Transverse colon (tissue), 4 donors: ENCODE measurements at regions of chr2 and their contacts with region 1.

Region 1: GRCh38 chr2:41869542-41870264 is 178.1 kb upstream of the PKDCC start:
- DNase-seq: peak; percentile 83
- H3K4me3 ChIP-seq: no peak overlapping the region
- H3K27ac ChIP-seq: no peak overlapping the region
- H3K4me1 ChIP-seq: peaks cover 0 to 16% (median 5%) of the 10 kb centered on the region in 4 donors
- H3K27me3 ChIP-seq: no peaks in the 10 kb centered on the region
- CTCF ChIP-seq: peak; percentile 86 to 95 (median 90)
- EP300 ChIP-seq: no peak
- POLR2A ChIP-seq: no peak

Region 2: DNA sequence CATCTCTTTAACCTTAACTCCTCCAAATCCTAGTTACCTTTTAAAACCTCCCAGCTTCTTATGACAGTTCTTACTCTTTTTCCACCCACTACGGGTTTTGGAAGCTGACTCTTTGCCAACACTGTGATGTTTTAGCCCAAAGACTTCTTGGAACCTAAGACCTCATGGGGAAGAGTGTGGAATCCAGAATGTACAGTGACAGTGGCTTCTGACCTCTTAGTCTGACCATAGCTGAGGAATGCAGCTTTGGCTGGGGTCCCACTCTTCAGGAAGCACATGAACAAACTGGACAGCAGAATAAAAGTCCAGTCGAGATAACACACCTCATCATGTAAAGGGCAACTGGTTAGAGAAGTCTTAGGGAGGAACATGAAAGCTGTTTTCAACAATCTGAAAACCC is 17.1 kb after region 1 on chr2:
- in situ Hi-C with region 1: no loop called
- intact Hi-C with region 1: no loop called
- DNase-seq: no peak
- H3K4me3 ChIP-seq: no peak overlapping the region
- H3K27ac ChIP-seq: no peak overlapping the region
- H3K4me1 ChIP-seq: no peaks in the 10 kb centered on the region
- H3K27me3 ChIP-seq: no peaks in the 10 kb centered on the region
- CTCF ChIP-seq: no peak
- EP300 ChIP-seq: no peak
- POLR2A ChIP-seq: no peak

Region 3: GRCh38 chr2:42086500-42086953 is 216.8 kb after region 1 on chr2:
- in situ Hi-C with region 1: loop called (anchors 5 kb)
- intact Hi-C with region 1: loop called (anchors 1 kb)
- DNase-seq: peak; percentile 52
- H3K4me3 ChIP-seq: no peak overlapping the region
- H3K27ac ChIP-seq: peak overlapping the region in 1 of 4 donors; percentile 60
- H3K4me1 ChIP-seq: peaks cover 6 to 41% (median 20%) of the 10 kb centered on the region in 4 donors
- H3K27me3 ChIP-seq: no peaks in the 10 kb centered on the region
- CTCF ChIP-seq: peak; percentile 65 to 90 (median 75)
- EP300 ChIP-seq: no peak
- POLR2A ChIP-seq: no peak

Region 4: GRCh38 chr2:42238644-42239288 is 369.1 kb after region 1 on chr2:
- in situ Hi-C with region 1: loop called in 2 of 4 experiments (anchors 25 kb)
- intact Hi-C with region 1: no loop called
- DNase-seq: peak; percentile 60
- H3K4me3 ChIP-seq: no peak overlapping the region
- H3K27ac ChIP-seq: no peak overlapping the region
- H3K4me1 ChIP-seq: peaks cover 0 to 60% (median 32%) of the 10 kb centered on the region in 4 donors
- H3K27me3 ChIP-seq: no peaks in the 10 kb centered on the region
- CTCF ChIP-seq: peak; percentile 46 to 65 (median 51)
- EP300 ChIP-seq: no peak
- POLR2A ChIP-seq: no peak

Region 5: GRCh38 chr2:42328148-42328833 is 458.6 kb after region 1 on chr2:
- in situ Hi-C with region 1: loop called in 2 of 4 experiments (anchors 25 kb)
- intact Hi-C with region 1: no loop called
- DNase-seq: no peak
- H3K4me3 ChIP-seq: no peak overlapping the region
- H3K27ac ChIP-seq: no peak overlapping the region
- H3K4me1 ChIP-seq: no peaks in the 10 kb centered on the region
- H3K27me3 ChIP-seq: no peaks in the 10 kb centered on the region
- CTCF ChIP-seq: peak; percentile 31 to 42 (median 34)
- EP300 ChIP-seq: no peak
- POLR2A ChIP-seq: no peak

Region 6: GRCh38 chr2:42360890-42361727 is 491.4 kb after region 1 on chr2 and contains the start of gene COX7A2L:
- in situ Hi-C with region 1: loop called in 1 of 4 experiments (anchors 25 kb)
- intact Hi-C with region 1: no loop called
- DNase-seq: peak; percentile 98
- H3K4me3 ChIP-seq: peak within 1 kb of the TSS; percentile 76 to 88 (median 84)
- H3K27ac ChIP-seq: peak within 1 kb of the TSS; percentile 92 to 97 (median 94)
- H3K4me1 ChIP-seq: peaks cover 6 to 41% (median 17%) of the 10 kb centered on the region in 4 donors
- H3K27me3 ChIP-seq: no peaks in the 10 kb centered on the region
- CTCF ChIP-seq: peak in 2 of 5 experiments; percentile 5 to 38
- EP300 ChIP-seq: no peak
- POLR2A ChIP-seq: peak; percentile 86
- total RNA-seq, gene COX7A2L: 12.3 to 180 (median 152) TPM